Activated naive CD4-positive, alpha-beta T cell treated with anti-CD3 and anti-CD28 coated beads, Interleukin-2, amount 10 ng/mL, durations not matched to agents 7 days and 5 days (primary cell): ENCODE measurements at regions of chr10 and their contacts with region 1.

Region 1: DNA sequence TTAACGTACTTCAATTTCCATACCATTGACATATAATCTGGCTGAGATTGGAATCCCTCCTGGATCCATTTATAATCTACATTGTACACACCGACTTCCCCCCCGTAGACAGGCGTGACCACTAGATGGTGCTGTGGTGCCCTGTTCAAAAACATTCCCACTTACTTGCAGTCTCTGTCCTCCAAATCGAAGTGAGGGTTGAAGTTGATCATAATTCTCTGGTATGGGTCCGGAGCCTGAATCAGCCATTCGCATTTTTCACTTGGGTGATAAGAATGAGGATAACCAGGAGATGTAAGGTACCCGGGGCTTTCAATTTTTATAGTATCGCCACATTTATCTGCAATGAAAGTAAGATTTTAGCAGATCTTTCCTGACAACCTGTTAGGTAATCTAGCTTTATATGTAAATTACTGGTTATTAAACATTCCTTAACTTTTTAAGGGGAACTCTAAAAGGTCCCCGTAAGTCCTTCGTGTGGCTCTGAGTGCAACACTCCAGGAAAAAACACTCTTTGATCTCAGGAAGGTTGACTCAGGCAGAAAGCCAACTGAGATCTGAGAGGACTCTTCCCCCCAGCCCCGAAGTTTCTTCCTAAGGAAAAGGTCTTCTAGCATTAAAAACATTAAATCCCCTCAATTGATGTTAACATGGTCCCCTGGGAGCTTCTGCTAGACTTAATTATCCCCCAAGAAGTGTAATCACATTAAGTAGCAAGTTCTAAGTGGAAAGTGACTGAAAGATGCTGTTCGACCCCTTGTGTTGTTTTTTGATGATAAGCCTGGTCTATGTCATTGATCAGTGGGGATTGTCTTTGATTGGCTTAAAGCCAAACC is 3.7 kb downstream of the NRP1 start:
- DNase-seq: peak; percentile 84
- H3K4me3 Mint-ChIP-seq: no peak overlapping the region
- H3K27ac Mint-ChIP-seq: no peak overlapping the region
- H3K4me1 Mint-ChIP-seq: peaks cover 16% of the 10 kb centered on the region
- H3K27me3 Mint-ChIP-seq: peaks cover 49% of the 10 kb centered on the region

Region 2: GRCh38 chr10:33193057-33193700 is 137.6 kb before region 1 on chr10:
- CTCF ChIA-PET with region 1: interaction called, 22 read pairs
- DNase-seq: peak; percentile 82
- H3K4me3 Mint-ChIP-seq: no peak overlapping the region
- H3K27ac Mint-ChIP-seq: no peak overlapping the region
- H3K4me1 Mint-ChIP-seq: peaks cover 2% of the 10 kb centered on the region
- H3K27me3 Mint-ChIP-seq: peaks cover 4% of the 10 kb centered on the region

Region 3: DNA sequence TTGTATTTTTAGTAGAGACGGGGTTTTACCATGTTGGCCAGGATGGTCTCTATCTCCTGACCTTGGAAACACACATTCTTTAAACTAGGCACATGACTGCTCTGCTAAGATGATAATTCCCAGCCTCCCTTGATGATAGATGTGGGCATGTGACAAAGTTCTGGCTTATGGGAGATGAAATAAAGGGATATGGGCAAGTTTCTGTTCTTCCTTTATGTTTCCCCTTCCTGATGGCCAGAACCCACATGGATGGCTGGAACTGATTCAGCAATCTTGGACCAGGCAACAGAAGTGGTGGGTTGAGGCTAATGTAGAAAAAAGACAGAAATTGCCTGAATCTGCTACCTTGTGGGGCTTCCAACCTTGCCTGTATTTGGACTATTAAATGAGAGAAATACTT is 64.4 kb after region 1 on chr10:
- CTCF ChIA-PET with region 1: no interaction called
- DNase-seq: no peak
- H3K4me3 Mint-ChIP-seq: no peak overlapping the region
- H3K27ac Mint-ChIP-seq: no peak overlapping the region
- H3K4me1 Mint-ChIP-seq: no peaks in the 10 kb centered on the region
- H3K27me3 Mint-ChIP-seq: peaks cover under 1% of the 10 kb centered on the region